ENCODE measurements at regions of chr2 and their contacts with region 1.

Region 1: GRCh38 chr2:61764035-61764800 is 89.6 kb downstream of the FAM161A start:
- DNase-seq: peak; percentile 85 to 99 (median 93)
- ATAC-seq: peak; percentile 96
- H3K4me3 ChIP-seq: peak overlapping the region; percentile 89
- H3K4me3 Mint-ChIP-seq: peak overlapping the region; percentile 96
- H3K27ac ChIP-seq: peak overlapping the region; percentile 92 to 98
- H3K27ac Mint-ChIP-seq: peak overlapping the region; percentile 96
- H3K4me1 ChIP-seq: peaks cover 13% of the 10 kb centered on the region
- H3K4me1 Mint-ChIP-seq: peaks cover 22% of the 10 kb centered on the region
- H3K27me3 ChIP-seq: no peaks in the 10 kb centered on the region
- H3K27me3 Mint-ChIP-seq: no peaks in the 10 kb centered on the region
- CTCF ChIP-seq: no peak

Region 2: GRCh38 chr2:61470965-61471904 is 293.0 kb before region 1 on chr2 and contains the start of gene USP34:
- CTCF ChIA-PET with region 1: no interaction called
- POLR2A ChIA-PET with region 1: no interaction called
- intact Hi-C with region 1: loop called in 1 of 2 experiments (anchors 2 kb)
- DNase-seq: peak; percentile 83 to 98 (median 90)
- ATAC-seq: peak; percentile 86
- H3K4me3 ChIP-seq: peak within 1 kb of the TSS; percentile 99
- H3K4me3 Mint-ChIP-seq: peak within 1 kb of the TSS; percentile 99
- H3K27ac ChIP-seq: peak within 1 kb of the TSS; percentile 95 to 100
- H3K27ac Mint-ChIP-seq: peak within 1 kb of the TSS; percentile 95
- H3K4me1 ChIP-seq: peaks cover 38% of the 10 kb centered on the region
- H3K4me1 Mint-ChIP-seq: peaks cover 36% of the 10 kb centered on the region
- H3K27me3 ChIP-seq: no peaks in the 10 kb centered on the region
- H3K27me3 Mint-ChIP-seq: no peaks in the 10 kb centered on the region
- CTCF ChIP-seq: no peak
- total RNA-seq, gene USP34: 137 to 138 TPM

Region 3: DNA sequence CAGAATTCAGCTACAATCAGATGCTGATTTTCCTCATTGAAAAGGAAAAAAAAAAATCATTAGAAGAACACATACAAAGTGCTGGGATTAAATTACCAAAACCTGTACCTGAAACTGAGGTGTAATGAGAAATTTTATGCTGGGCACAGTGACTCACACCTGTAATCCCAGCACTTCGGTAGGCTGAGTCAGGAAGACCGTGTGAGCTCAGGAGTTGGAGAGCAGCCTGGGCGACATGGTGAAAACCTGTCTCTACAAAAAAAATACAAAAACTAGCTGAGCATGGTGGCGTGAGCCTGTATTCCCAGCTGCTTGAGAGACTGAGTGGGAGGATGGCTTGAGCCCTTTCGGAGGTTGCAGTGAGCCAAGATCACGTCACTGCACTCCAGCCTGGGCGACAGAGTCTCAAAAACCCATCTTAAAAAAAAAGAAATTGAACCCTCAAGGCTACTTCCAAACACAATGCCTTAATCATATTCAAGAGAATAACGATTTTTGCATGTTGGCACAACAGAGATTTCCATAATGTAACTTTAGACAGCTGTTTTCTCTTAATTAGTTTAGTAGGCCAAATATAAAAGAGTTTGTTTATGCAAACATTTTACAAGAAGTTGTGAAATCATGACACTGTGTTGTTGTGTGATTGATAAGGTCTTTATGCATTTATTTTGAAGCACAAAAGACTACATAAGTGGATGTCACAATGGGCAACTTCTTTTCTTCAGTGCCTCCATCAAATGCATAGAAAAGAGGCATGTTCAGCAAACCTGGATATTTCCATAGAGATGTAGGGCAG is 25.8 kb after region 1 on chr2:
- CTCF ChIA-PET with region 1: no interaction called
- POLR2A ChIA-PET with region 1: no interaction called
- intact Hi-C with region 1: loop called in 1 of 2 experiments (anchors 1 kb)
- DNase-seq: no peak
- ATAC-seq: no peak
- H3K4me3 ChIP-seq: no peak overlapping the region
- H3K4me3 Mint-ChIP-seq: no peak overlapping the region
- H3K27ac ChIP-seq: no peak overlapping the region
- H3K27ac Mint-ChIP-seq: no peak overlapping the region
- H3K4me1 ChIP-seq: peaks cover 4% of the 10 kb centered on the region
- H3K4me1 Mint-ChIP-seq: no peaks in the 10 kb centered on the region
- H3K27me3 ChIP-seq: no peaks in the 10 kb centered on the region
- H3K27me3 Mint-ChIP-seq: peaks cover 19% of the 10 kb centered on the region
- CTCF ChIP-seq: no peak

Region 4: DNA sequence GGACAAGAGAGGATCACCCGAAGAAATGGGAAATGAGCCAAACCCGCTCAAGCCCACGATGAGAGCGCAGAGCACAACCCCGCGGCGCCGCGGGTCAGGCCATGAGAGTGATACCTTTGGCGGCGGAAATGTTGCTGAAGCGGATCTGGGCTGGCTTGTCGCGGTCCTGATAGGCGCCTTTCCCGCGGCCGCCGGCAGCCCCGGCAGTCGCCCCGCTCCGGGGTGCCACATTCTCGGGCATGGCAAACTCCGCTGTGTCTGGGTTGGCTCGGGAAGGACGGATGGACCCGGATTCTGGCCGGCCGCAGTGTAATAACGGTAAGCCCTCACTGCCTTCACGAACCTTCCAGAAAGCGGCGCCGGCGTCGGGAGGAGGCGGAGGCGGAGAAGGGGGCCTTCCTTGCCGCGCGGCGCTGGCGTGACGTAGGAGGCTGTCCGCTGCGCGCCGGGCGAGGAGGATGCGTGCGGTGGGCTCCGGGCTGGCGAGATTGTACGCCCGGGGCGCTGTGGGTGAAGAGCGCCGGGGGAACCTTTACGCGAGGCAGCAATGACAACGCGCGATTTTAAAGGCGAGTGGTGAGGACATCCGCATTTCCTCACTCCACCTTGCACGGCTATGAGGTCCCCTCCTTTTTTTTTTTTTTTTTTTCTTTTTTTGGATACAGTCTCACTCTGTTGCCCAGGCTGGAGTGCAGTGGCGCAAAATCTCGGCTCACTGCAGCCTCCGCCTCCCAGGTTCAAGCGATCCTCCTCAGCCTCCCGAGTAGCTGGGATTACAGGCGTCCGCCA is 124.2 kb after region 1 on chr2 and contains the start of gene CCT4:
- CTCF ChIA-PET with region 1: no interaction called
- POLR2A ChIA-PET with region 1: no interaction called
- intact Hi-C with region 1: loop called in 1 of 2 experiments (anchors 2 kb)
- DNase-seq: peak; percentile 83 to 96 (median 88)
- ATAC-seq: peak; percentile 79
- H3K4me3 ChIP-seq: peak within 1 kb of the TSS; percentile 79
- H3K4me3 Mint-ChIP-seq: peak within 1 kb of the TSS; percentile 100
- H3K27ac ChIP-seq: peak within 1 kb of the TSS; percentile 90 to 98
- H3K27ac Mint-ChIP-seq: peak within 1 kb of the TSS; percentile 100
- H3K4me1 ChIP-seq: peaks cover 19% of the 10 kb centered on the region
- H3K4me1 Mint-ChIP-seq: peaks cover 38% of the 10 kb centered on the region
- H3K27me3 ChIP-seq: no peaks in the 10 kb centered on the region
- H3K27me3 Mint-ChIP-seq: no peaks in the 10 kb centered on the region
- CTCF ChIP-seq: no peak
- total RNA-seq, gene CCT4: 100 to 114 TPM

Measured in CD4-positive, alpha-beta T cell (primary cell).